Body of pancreas (tissue), 4 donors: ENCODE measurements at regions of chr14 and their contacts with region 1.

Region 1: GRCh38 chr14:77067632-77068514 is 30.2 kb upstream of the CIPC start:
- DNase-seq: peak; percentile 78 to 86 (median 82)
- ATAC-seq: peak; percentile 86
- H3K4me3 ChIP-seq: no peak overlapping the region
- H3K27ac ChIP-seq: no peak overlapping the region
- H3K4me1 ChIP-seq: peaks cover 20% of the 10 kb centered on the region
- H3K27me3 ChIP-seq: no peaks in the 10 kb centered on the region
- CTCF ChIP-seq: peak; percentile 75 to 94 (median 92)
- POLR2A ChIP-seq: no peak

Region 2: GRCh38 chr14:76034566-76034965 is 1033.3 kb before region 1 on chr14:
- intact Hi-C with region 1: no loop called
- DNase-seq: no peak
- ATAC-seq: no peak
- H3K4me3 ChIP-seq: no peak overlapping the region
- H3K27ac ChIP-seq: no peak overlapping the region
- H3K4me1 ChIP-seq: peaks cover 4% of the 10 kb centered on the region
- H3K27me3 ChIP-seq: no peaks in the 10 kb centered on the region
- CTCF ChIP-seq: no peak
- POLR2A ChIP-seq: no peak

Region 3: GRCh38 chr14:76876076-76876475 is 191.8 kb before region 1 on chr14:
- intact Hi-C with region 1: loop called (anchors 5 kb)
- DNase-seq: peak; percentile 67 to 75 (median 72)
- ATAC-seq: peak; percentile 86
- H3K4me3 ChIP-seq: no peak overlapping the region
- H3K27ac ChIP-seq: no peak overlapping the region
- H3K4me1 ChIP-seq: peaks cover 7% of the 10 kb centered on the region
- H3K27me3 ChIP-seq: no peaks in the 10 kb centered on the region
- CTCF ChIP-seq: peak; percentile 79 to 97 (median 94)
- POLR2A ChIP-seq: no peak

Region 4: GRCh38 chr14:76918751-76919543 is 148.9 kb before region 1 on chr14:
- intact Hi-C with region 1: loop called (anchors 10 kb)
- DNase-seq: peak; percentile 91 to 97 (median 94)
- ATAC-seq: peak; percentile 88
- H3K4me3 ChIP-seq: no peak overlapping the region
- H3K27ac ChIP-seq: peak overlapping the region; percentile 91 to 95 (median 93)
- H3K4me1 ChIP-seq: peaks cover 48% of the 10 kb centered on the region
- H3K27me3 ChIP-seq: no peaks in the 10 kb centered on the region
- CTCF ChIP-seq: peak in 4 of 7 experiments; percentile 17 to 31 (median 30)
- POLR2A ChIP-seq: peak in 2 of 3 donors; percentile 26 to 39